ENCODE measurements at regions of chr3 and their contacts with region 1.

Region 1: GRCh38 chr3:183122257-183122932 is 23.1 kb upstream of the MCCC1 start:
- DNase-seq: no peak
- ATAC-seq: no peak

Region 2: GRCh38 chr3:183188895-183189462 is 66.6 kb after region 1 on chr3:
- intact Hi-C with region 1: loop called (anchors 10 kb)
- DNase-seq: peak; percentile 41
- ATAC-seq: peak; percentile 52